Caco-2 (cell line): ENCODE measurements at regions of chr7 and their contacts with region 1.

Region 1: DNA sequence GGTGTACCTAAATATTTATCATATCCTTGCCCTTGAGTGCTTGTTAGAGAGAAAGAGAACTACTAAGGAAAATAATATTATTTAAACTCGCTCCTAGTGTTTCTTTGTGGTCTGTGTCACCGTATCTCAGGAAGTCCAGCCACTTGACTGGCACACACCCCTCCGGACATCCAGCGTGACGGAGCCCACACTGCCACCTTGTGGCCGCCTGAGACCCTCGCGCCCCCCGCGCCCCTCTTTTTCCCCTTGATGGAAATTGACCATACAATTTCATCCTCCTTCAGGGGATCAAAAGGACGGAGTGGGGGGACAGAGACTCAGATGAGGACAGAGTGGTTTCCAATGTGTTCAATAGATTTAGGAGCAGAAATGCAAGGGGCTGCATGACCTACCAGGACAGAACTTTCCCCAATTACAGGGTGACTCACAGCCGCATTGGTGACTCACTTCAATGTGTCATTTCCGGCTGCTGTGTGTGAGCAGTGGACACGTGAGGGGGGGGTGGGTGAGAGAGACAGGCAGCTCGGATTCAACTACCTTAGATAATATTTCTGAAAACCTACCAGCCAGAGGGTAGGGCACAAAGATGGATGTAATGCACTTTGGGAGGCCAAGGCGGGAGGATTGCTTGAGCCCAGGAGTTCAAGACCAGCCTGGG is 11.4 kb downstream of the SERPINE1 start:
- DNase-seq: peak; percentile 85 to 95
- H3K4me3 ChIP-seq: peak overlapping the region; percentile 29
- H3K4me3 Mint-ChIP-seq: peak overlapping the region; percentile 76
- H3K27ac Mint-ChIP-seq: peak overlapping the region; percentile 88
- H3K4me1 ChIP-seq: peaks cover 9% of the 10 kb centered on the region; the same call in 1 of the 2 replicates
- H3K4me1 Mint-ChIP-seq: peaks cover 4% of the 10 kb centered on the region
- H3K27me3 ChIP-seq: no peaks in the 10 kb centered on the region
- H3K27me3 Mint-ChIP-seq: peaks cover 3% of the 10 kb centered on the region
- CTCF ChIP-seq: peak; percentile 86 to 94

Region 2: DNA sequence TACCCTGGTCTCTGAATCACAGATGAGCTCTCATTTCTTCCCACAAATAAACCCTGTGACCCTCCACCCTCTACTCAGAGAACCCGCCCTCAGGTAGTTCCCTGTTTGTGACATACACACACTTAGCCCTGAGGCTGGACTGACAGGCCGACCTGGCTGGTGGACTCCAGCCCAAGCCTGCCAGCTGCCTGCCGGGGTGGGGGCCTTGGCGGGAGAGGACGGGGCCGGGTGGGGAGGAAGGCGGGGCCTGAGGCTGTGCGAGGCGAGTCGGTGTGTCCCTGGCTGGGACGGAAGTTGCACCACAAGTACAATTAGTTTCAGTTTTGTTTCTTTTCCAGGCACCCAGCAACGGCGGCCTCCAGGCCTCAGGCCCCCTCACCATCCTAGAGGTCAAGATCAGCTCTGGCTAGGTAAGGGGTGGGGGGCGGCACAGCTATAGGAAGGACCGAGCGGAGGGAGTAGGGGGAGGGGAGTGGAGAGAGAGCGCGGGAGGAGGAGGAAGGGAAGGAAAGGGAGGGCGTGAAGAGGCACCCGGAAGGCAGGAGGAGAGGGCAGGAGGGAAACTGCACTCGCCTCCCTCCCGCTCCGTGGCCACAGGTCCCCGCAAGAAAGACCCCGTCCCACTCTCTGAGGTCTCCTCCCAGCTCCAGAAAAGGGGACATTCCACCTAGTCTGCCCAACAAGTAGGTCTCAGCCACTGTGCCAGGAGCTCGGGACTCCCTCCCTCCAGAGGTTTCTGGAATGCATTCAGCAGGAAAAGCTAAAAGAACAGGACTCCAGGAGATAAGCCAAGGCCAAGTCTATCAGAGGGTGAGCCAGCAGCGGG is 53.0 kb before region 1 on chr7 and contains the start of gene TRIM56:
- CTCF ChIA-PET with region 1: interaction called, 8 read pairs
- POLR2A ChIA-PET with region 1: no interaction called
- intact Hi-C with region 1: loop called (anchors 1 kb)
- DNase-seq: peak; percentile 95 to 96
- H3K4me3 ChIP-seq: peak within 1 kb of the TSS; percentile 82
- H3K4me3 Mint-ChIP-seq: peak within 1 kb of the TSS; percentile 85
- H3K27ac Mint-ChIP-seq: peak within 1 kb of the TSS; percentile 83
- H3K4me1 ChIP-seq: peaks cover 12% of the 10 kb centered on the region
- H3K4me1 Mint-ChIP-seq: peaks cover 16% of the 10 kb centered on the region
- H3K27me3 ChIP-seq: no peaks in the 10 kb centered on the region
- H3K27me3 Mint-ChIP-seq: no peaks in the 10 kb centered on the region
- CTCF ChIP-seq: no peak
- total RNA-seq, gene TRIM56: 30.3 and 33.4 TPM in 2 replicates

Region 3: GRCh38 chr7:101153969-101154692 is 15.8 kb after region 1 on chr7 and contains the start of gene AP1S1:
- CTCF ChIA-PET with region 1: interaction called, 13 read pairs
- POLR2A ChIA-PET with region 1: no interaction called
- intact Hi-C with region 1: no loop called
- DNase-seq: peak; percentile 96 to 98
- H3K4me3 ChIP-seq: peak within 1 kb of the TSS; percentile 87
- H3K4me3 Mint-ChIP-seq: peak within 1 kb of the TSS; percentile 81
- H3K27ac Mint-ChIP-seq: peak within 1 kb of the TSS; percentile 94
- H3K4me1 ChIP-seq: peaks cover 14% of the 10 kb centered on the region; the same call in 1 of the 2 replicates
- H3K4me1 Mint-ChIP-seq: peaks cover 27% of the 10 kb centered on the region
- H3K27me3 ChIP-seq: no peaks in the 10 kb centered on the region
- H3K27me3 Mint-ChIP-seq: peaks cover 10% of the 10 kb centered on the region
- CTCF ChIP-seq: no peak
- total RNA-seq, gene AP1S1: 52.3 and 62.9 TPM in 2 replicates

Region 4: DNA sequence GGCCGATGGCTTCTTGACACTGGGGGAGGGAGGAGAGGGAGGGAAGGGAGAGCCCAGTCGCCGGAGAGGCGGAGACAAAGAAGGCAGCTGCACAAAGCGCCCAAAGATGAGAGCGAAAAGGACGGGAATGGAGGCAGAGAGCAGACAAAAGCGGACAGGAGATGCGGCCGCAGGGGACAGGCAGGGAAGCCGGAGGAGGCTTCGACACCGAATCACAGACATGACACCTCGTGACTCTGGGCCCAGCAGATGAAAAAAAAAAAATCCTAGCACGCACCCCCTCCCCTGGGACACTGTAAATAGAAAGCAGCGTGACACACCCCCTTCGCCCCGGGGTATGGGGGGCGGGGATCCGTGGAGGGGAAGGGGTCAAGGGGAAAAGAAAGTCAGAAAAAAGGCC is 40.8 kb after region 1 on chr7:
- CTCF ChIA-PET with region 1: no interaction called
- POLR2A ChIA-PET with region 1: interaction called, 11 read pairs
- intact Hi-C with region 1: no loop called
- DNase-seq: no peak
- H3K4me3 ChIP-seq: peak overlapping the region; percentile 37
- H3K4me3 Mint-ChIP-seq: peak overlapping the region; percentile 84
- H3K27ac Mint-ChIP-seq: no peak overlapping the region
- H3K4me1 ChIP-seq: peaks cover 4% of the 10 kb centered on the region; the same call in 1 of the 2 replicates
- H3K4me1 Mint-ChIP-seq: peaks cover 16% of the 10 kb centered on the region
- H3K27me3 ChIP-seq: no peaks in the 10 kb centered on the region; the same call in 1 of the 2 replicates
- H3K27me3 Mint-ChIP-seq: peaks cover 23% of the 10 kb centered on the region
- CTCF ChIP-seq: no peak

Region 5: DNA sequence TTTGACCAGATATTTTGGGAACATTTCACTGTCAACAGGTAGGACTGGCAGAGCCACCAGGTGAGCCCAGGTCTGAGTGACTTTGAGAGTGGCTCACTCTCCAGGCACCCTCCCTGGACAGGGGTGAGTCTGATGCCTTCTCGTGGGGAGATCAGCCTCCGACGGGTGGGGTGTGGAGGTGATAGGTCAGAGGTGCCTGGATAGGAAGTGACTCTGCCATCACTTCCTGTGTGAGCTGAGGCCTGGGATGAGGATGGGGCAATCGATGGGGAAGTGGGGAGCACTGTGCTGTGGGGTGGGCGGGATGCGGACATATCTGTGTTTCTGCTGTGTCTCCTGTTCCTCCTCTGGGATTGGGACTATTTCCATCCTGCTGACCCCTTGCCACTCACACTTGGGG is 148.7 kb after region 1 on chr7:
- CTCF ChIA-PET with region 1: interaction called, 101 read pairs
- POLR2A ChIA-PET with region 1: no interaction called
- intact Hi-C with region 1: no loop called
- DNase-seq: no peak
- H3K4me3 ChIP-seq: no peak overlapping the region
- H3K4me3 Mint-ChIP-seq: no peak overlapping the region
- H3K27ac Mint-ChIP-seq: no peak overlapping the region
- H3K4me1 ChIP-seq: no peaks in the 10 kb centered on the region
- H3K4me1 Mint-ChIP-seq: peaks cover 6% of the 10 kb centered on the region
- H3K27me3 ChIP-seq: no peaks in the 10 kb centered on the region
- H3K27me3 Mint-ChIP-seq: peaks cover 14% of the 10 kb centered on the region
- CTCF ChIP-seq: no peak